HEK293 (cell line): ENCODE measurements at regions of chr22 and their contacts with region 1.

Region 1: GRCh38 chr22:37933711-37934376 is 19.6 kb downstream of the C22orf23 start:
- H3K4me3 ChIP-seq: no peak overlapping the region
- H3K27ac ChIP-seq: peak overlapping the region; percentile 67
- H3K4me1 ChIP-seq: peaks cover 6% of the 10 kb centered on the region
- CTCF ChIP-seq: peak; percentile 98

Region 2: GRCh38 chr22:37601540-37602442 is 332.1 kb before region 1 on chr22:
- CTCF ChIA-PET with region 1: no interaction called
- POLR2A ChIA-PET with region 1: no interaction called
- H3K4me3 ChIP-seq: no peak overlapping the region
- H3K27ac ChIP-seq: no peak overlapping the region
- H3K4me1 ChIP-seq: peaks cover 4% of the 10 kb centered on the region; the same call in 1 of the 2 replicates
- CTCF ChIP-seq: no peak

Region 3: GRCh38 chr22:37887610-37888378 is 46.0 kb before region 1 on chr22:
- CTCF ChIA-PET with region 1: interaction called, 25 read pairs
- POLR2A ChIA-PET with region 1: no interaction called
- H3K4me3 ChIP-seq: no peak overlapping the region
- H3K27ac ChIP-seq: no peak overlapping the region
- H3K4me1 ChIP-seq: no peaks in the 10 kb centered on the region
- CTCF ChIP-seq: peak; percentile 53; the same call in 1 of the 2 replicates

Region 4: GRCh38 chr22:37896181-37896592 is 37.7 kb before region 1 on chr22:
- CTCF ChIA-PET with region 1: interaction called, 11 read pairs
- POLR2A ChIA-PET with region 1: no interaction called
- H3K4me3 ChIP-seq: no peak overlapping the region
- H3K27ac ChIP-seq: peak overlapping the region; percentile 44
- H3K4me1 ChIP-seq: no peaks in the 10 kb centered on the region
- CTCF ChIP-seq: no peak

Region 5: GRCh38 chr22:37953437-37954179 is 19.8 kb after region 1 on chr22 and contains the starts of genes C22orf23 and POLR2F:
- CTCF ChIA-PET with region 1: interaction called, 16 read pairs
- POLR2A ChIA-PET with region 1: interaction called, 11 read pairs
- H3K4me3 ChIP-seq: peak within 1 kb of the TSS; percentile 99
- H3K27ac ChIP-seq: peak within 1 kb of the TSS; percentile 47; the same call in 1 of the 2 replicates
- H3K4me1 ChIP-seq: 0 out of 2 replicates have a peak, but pooled peaks cover 4% of the 10 kb centered on the region
- CTCF ChIP-seq: peak; percentile 74